ENCODE measurements at regions of chr1 and their contacts with region 1.

Region 1: GRCh38 chr1:207963427-207964194 is 52.7 kb upstream of the CD34 start:
- DNase-seq: peak; percentile 39
- H3K4me3 ChIP-seq: peak overlapping the region; percentile 66 to 71 (median 68)
- H3K27ac ChIP-seq: peak overlapping the region; percentile 89 to 95 (median 94)
- H3K4me1 ChIP-seq: peaks cover 24 to 61% (median 28%) of the 10 kb centered on the region in 3 donors
- H3K27me3 ChIP-seq: peaks cover 0 to 11% (median 0%) of the 10 kb centered on the region in 4 donors
- CTCF ChIP-seq: peak; percentile 97 to 100 (median 100)
- POLR2A ChIP-seq: peak in 3 of 4 donors; percentile 71 to 92 (median 76)

Region 2: DNA sequence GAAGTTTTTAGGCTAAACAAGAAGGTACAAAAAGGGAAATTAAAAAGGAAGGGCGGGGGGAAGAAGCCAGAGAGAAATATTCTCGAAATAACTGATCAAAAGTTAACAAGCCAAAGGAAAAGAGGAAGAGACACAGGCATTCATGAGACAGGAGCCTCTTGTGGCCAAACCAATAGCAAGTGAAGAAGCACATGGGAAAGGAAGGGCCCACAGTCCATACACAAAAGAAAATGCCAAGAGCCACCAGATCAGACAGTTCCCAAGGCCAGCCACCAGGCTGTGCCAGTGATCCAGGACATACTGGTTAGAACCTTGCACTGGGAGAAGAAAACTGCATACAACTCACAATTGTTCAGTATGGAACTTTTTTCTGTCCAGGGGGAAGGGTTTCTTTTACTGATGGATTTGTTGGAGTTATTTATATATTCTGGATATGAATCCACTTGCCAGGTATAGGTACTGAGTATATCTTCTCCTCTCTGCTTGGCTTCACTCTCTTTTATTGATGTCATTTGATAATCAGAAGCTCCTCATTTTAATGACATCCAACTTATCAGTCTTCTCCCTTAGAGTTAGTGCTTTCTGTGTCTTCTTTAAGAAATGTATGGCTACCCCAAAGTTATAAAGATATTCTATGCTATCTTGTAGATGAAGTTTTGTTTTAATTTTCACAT is 135.0 kb before region 1 on chr1:
- intact Hi-C with region 1: loop called (anchors 10 kb)
- DNase-seq: no peak
- H3K4me3 ChIP-seq: no peak overlapping the region
- H3K27ac ChIP-seq: peak overlapping the region; percentile 75 to 96 (median 92)
- H3K4me1 ChIP-seq: peaks cover 61 to 95% (median 85%) of the 10 kb centered on the region in 3 donors
- H3K27me3 ChIP-seq: no peaks in the 10 kb centered on the region
- CTCF ChIP-seq: peak; percentile 71 to 97 (median 94)
- POLR2A ChIP-seq: no peak

Region 3: DNA sequence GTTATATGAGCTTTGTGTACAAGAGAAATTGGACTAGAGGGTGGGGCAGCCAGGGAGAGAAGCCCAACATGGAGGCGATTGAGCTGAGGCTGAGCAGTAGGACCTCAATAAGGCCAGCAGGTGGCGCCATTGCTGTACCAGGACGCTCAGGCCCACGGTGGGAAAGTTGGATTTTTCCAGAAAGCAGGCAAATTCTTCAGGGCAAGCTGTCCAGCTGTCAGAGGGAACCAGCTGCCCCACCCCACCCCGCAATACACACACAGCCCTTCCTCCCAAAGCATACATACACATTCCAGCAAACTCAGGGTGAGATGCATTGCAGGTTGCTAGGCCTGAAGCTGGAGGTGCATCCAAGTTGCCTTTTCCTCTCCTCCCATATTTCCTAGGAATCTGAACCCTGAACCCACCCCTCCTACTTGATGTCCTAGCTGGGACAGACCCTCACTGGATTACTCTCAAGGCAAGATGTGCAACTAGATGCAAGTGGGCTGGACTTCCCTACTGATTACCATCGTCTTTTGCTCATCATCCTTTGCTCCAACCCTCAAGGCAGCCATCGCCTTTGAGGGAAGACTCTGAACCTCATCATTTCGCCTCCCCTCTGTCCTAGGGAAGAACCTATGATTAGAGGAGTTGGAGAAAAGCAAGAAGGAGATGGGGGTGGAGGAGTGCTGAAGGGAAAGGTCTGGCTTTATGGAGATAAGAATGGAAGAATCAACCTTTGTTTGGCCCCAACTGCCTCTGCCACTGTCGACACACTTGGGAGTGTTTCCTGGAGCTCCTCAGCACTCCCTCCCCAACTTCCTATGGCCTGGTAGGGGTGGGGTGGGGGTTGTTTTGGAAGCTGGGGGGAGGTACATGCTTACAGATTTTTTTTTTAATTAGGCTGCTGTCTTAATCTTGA is 78.2 kb before region 1 on chr1:
- intact Hi-C with region 1: loop called (anchors 5 kb)
- DNase-seq: peak; percentile 22
- H3K4me3 ChIP-seq: no peak overlapping the region
- H3K27ac ChIP-seq: peak overlapping the region; percentile 30 to 82 (median 68)
- H3K4me1 ChIP-seq: peaks cover 15 to 78% (median 33%) of the 10 kb centered on the region in 3 donors
- H3K27me3 ChIP-seq: no peaks in the 10 kb centered on the region
- CTCF ChIP-seq: peak; percentile 94 to 96 (median 94)
- POLR2A ChIP-seq: no peak